Dorsolateral prefrontal cortex (tissue), 120 donors: ENCODE measurements at regions of chr13 and their contacts with region 1.

Region 1: DNA sequence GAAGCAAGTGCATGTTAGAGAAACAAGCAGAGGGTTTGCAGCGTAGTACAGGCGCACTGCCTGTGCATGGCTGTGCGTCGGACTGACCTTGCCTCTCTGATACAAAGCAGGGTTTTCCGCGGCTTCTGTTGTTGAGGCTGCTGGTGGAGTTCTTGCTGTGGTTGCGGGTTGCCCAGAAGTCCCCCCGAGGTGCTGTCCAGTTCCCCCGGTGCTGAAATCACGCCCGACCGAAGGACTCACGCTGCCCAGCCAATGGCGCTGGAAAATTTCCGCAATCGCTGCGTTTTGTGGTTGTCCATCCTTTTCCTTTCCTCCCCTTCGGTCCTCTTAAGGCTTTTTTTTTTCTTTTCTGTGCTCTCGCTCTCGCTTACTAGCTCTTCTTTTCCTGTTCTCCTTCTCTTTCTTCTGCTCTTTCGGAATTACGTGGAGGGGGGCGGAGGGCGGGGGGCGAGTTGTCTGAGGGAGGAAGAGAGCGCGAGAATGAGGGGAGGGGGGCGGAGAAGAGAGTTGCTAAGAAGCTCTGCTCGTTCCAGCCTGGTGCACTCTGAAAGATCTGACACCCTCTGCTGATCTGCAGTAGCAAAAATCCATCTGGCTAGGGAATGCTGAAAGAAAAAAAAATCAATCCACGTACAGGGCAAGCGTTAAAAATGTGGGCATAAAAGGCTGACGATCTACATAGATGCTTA is at the start of gene SLITRK1:
- DNase-seq: peak in 9 of 10 donors; percentile 74 to 88 (median 81)
- H3K4me3 ChIP-seq: peak within 1 kb of the TSS; percentile 42 to 87 (median 70)
- H3K27ac ChIP-seq: peak within 1 kb of the TSS; percentile 73 to 96 (median 91)
- H3K27me3 ChIP-seq: peaks cover 0 to 17% (median 0%) of the 10 kb centered on the region in 45 donors
- CTCF ChIP-seq: peak in 26 of 56 donors; percentile 7 to 42 (median 20)
- total RNA-seq, gene SLITRK1: 24.5 to 76.6 (median 58.5) TPM

Region 2: GRCh38 chr13:83634601-83635000 is 247.5 kb before region 1 on chr13:
- intact Hi-C with region 1: loop called (anchors 2 to 5 kb)
- DNase-seq: peak in 1 of 10 donors; percentile 39
- H3K4me3 ChIP-seq: peak overlapping the region in 2 of 59 donors; percentile 10 to 30
- H3K27ac ChIP-seq: peak overlapping the region in 24 of 59 donors; percentile 6 to 75 (median 46)
- H3K27me3 ChIP-seq: no peaks in the 10 kb centered on the region
- CTCF ChIP-seq: peak in 2 of 56 donors; percentile 5 to 8

Region 3: DNA sequence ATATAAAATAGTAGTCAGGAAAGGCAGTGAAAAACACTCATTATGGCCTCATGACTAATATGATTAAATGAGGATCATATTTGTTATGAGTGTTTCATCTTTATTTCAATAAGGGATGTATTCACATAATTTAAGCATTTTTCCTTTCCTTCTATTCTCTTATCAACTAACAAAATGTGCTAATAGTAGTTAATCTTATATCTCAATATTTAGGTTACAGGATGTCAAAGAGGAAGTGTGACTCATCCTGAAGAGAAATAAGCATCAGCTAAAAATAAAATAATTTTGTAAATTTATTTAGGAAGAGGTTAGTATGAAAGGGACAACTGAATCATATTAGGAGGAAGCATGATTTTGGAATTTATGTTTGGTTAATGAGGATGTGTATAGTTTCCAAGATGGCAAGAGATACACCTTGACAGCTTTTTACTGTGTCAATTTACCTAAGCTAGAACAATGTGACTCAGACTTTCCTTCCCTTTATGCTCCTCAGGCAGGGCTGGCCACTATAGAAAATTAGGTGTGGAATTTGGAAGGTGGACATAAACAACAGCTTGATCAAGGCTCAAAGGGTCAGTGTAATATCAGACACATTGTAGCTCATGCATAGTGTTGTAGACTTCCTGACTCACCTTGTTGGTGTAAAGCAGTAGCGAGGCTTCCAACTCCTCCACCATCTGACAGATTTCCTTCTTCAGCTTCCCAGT is 172.5 kb before region 1 on chr13:
- intact Hi-C with region 1: no loop called
- DNase-seq: no peak
- H3K4me3 ChIP-seq: no peak overlapping the region
- H3K27ac ChIP-seq: no peak overlapping the region
- H3K27me3 ChIP-seq: no peaks in the 10 kb centered on the region
- CTCF ChIP-seq: no peak

Region 4: GRCh38 chr13:83773961-83774360 is 108.1 kb before region 1 on chr13:
- intact Hi-C with region 1: loop called (anchors 5 to 10 kb)
- DNase-seq: no peak
- H3K4me3 ChIP-seq: peak overlapping the region in 4 of 59 donors; percentile 3 to 6 (median 6)
- H3K27ac ChIP-seq: peak overlapping the region in 42 of 59 donors; percentile 0 to 78 (median 40)
- H3K27me3 ChIP-seq: no peaks in the 10 kb centered on the region
- CTCF ChIP-seq: no peak

Region 5: GRCh38 chr13:83796364-83796763 is 85.7 kb before region 1 on chr13:
- intact Hi-C with region 1: no loop called
- DNase-seq: no peak
- H3K4me3 ChIP-seq: no peak overlapping the region
- H3K27ac ChIP-seq: peak overlapping the region in 3 of 59 donors; percentile 1 to 18 (median 17)
- H3K27me3 ChIP-seq: no peaks in the 10 kb centered on the region
- CTCF ChIP-seq: no peak

Region 6: GRCh38 chr13:83819611-83820010 is 62.5 kb before region 1 on chr13:
- intact Hi-C with region 1: loop called in 1 of 2 experiments (anchors 5 kb)
- DNase-seq: no peak
- H3K4me3 ChIP-seq: no peak overlapping the region
- H3K27ac ChIP-seq: peak overlapping the region in 9 of 59 donors; percentile 2 to 52 (median 41)
- H3K27me3 ChIP-seq: no peaks in the 10 kb centered on the region
- CTCF ChIP-seq: no peak

Region 7: GRCh38 chr13:83839146-83839545 is 42.9 kb before region 1 on chr13:
- intact Hi-C with region 1: loop called (anchors 5 kb)
- DNase-seq: no peak
- H3K4me3 ChIP-seq: peak overlapping the region in 32 of 59 donors; percentile 1 to 49 (median 20)
- H3K27ac ChIP-seq: peak overlapping the region in 45 of 59 donors; percentile 0 to 82 (median 56)
- H3K27me3 ChIP-seq: no peaks in the 10 kb centered on the region
- CTCF ChIP-seq: no peak